Activated CD4-positive, alpha-beta memory T cell treated with anti-CD3 and anti-CD28 coated beads for 36 hours (primary cell): ENCODE measurements at regions of chr9 and their contacts with region 1.

Region 1: DNA sequence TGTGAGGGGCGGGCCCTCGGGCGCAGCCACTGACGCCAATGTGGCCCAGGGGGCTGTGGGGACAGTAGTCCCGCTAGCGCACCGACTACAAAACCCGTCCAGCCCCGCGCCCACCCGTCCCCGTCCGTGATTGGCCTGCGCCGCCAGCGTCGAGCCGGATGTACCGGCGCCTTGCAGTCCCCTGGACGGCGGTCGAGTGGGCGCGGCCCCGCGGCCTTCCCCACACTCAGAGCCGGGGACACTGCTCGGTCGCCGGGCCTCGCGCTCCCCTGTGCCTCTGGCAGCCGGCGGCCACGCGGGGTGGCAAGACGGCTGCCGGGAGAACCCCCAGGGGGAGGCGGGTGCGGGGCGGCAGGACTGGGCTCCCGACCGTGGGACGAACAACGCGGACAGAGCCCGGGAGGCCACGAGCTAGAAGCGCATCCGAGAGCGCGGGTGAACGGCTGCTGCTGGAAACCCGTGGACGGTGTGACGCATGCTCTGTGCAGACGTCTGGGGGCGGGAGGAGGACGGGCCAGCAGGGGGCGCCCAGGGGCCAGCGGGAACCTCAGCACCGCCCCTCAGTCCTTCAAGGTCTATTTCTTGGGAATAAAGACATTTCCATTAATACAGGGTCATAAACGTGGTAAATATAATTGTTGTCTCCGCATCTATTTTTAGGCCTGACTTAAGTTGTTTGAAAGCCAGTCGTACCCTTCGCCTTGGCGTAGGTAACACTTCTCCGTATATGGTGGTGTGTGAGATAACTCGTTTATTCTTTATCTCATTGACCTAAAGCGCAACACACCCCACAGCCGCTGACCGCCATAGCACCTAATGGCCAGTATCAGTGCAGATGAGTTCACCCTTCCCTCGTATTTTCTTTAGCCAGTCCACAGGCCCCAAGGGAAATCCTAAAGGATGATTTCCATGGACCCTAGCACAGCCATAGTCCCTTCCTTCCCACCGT is 629 bp upstream of the BICD2 start:
- DNase-seq: peak; percentile 99
- H3K4me3 Mint-ChIP-seq: peak overlapping the region; percentile 82
- H3K27ac Mint-ChIP-seq: peak overlapping the region; percentile 79
- H3K4me1 Mint-ChIP-seq: peaks cover 48% of the 10 kb centered on the region
- H3K27me3 Mint-ChIP-seq: no peaks in the 10 kb centered on the region

Region 2: DNA sequence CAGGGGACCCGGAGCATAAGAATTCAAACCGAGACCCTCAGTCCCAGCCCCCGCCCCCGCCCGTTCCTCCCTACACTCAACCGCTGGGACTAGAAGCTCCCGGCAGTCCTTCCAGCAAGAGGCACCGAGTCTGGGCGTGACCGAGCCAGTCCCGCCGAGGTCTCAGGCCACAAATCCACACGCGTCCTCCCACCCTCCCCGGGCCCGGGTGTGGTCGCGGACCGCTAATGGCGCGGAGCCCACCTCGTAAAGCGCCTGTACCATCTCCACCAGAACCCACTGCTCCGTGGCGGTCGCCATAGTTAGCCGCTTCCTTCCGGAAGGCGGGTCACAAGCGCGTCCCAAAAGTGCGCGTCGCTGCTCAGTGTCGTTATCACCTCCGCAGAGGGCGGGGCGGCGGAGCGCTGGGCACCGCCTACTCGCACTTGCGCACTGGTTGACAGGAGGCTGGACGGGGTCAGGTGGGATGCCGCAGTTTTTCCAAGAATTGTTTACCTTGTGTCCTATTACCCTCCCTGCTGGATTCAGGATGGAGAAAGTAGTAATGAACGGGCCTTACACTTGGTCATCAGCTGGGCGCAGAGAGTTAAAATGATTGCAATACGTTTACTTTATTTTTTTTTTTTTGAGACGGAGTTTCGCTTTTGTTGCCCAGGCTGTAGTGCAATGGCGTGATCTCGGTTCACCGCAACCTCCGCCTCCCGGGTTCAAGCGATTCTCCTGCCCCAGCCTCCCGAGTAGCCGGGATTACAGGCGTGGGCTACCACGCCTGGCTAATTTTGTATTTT is 650.0 kb before region 1 on chr9 and contains the start of gene SPTLC1:
- CTCF ChIA-PET with region 1: no interaction called
- POLR2A ChIA-PET with region 1: no interaction called
- intact Hi-C with region 1: loop called (anchors 2 kb)
- DNase-seq: peak; percentile 97
- H3K4me3 Mint-ChIP-seq: peak within 1 kb of the TSS; percentile 97
- H3K27ac Mint-ChIP-seq: peak within 1 kb of the TSS; percentile 94
- H3K4me1 Mint-ChIP-seq: peaks cover 22% of the 10 kb centered on the region
- H3K27me3 Mint-ChIP-seq: no peaks in the 10 kb centered on the region
- total RNA-seq, gene SPTLC1: 39.9 to 41.2 TPM

Region 3: GRCh38 chr9:92669890-92670708 is 95.2 kb before region 1 on chr9 and contains the start of gene IPPK:
- CTCF ChIA-PET with region 1: interaction called, 4 read pairs
- POLR2A ChIA-PET with region 1: interaction called, 15 read pairs
- intact Hi-C with region 1: loop called (anchors 1 kb)
- DNase-seq: peak; percentile 99
- H3K4me3 Mint-ChIP-seq: peak within 1 kb of the TSS; percentile 95
- H3K27ac Mint-ChIP-seq: peak within 1 kb of the TSS; percentile 85
- H3K4me1 Mint-ChIP-seq: peaks cover 35% of the 10 kb centered on the region
- H3K27me3 Mint-ChIP-seq: no peaks in the 10 kb centered on the region
- total RNA-seq, gene IPPK: 10.8 to 11.0 TPM

Region 4: GRCh38 chr9:92738661-92739081 is 26.6 kb before region 1 on chr9:
- CTCF ChIA-PET with region 1: no interaction called
- POLR2A ChIA-PET with region 1: no interaction called
- intact Hi-C with region 1: no loop called
- DNase-seq: no peak
- H3K4me3 Mint-ChIP-seq: no peak overlapping the region
- H3K27ac Mint-ChIP-seq: no peak overlapping the region
- H3K4me1 Mint-ChIP-seq: peaks cover 62% of the 10 kb centered on the region
- H3K27me3 Mint-ChIP-seq: no peaks in the 10 kb centered on the region

Region 5: DNA sequence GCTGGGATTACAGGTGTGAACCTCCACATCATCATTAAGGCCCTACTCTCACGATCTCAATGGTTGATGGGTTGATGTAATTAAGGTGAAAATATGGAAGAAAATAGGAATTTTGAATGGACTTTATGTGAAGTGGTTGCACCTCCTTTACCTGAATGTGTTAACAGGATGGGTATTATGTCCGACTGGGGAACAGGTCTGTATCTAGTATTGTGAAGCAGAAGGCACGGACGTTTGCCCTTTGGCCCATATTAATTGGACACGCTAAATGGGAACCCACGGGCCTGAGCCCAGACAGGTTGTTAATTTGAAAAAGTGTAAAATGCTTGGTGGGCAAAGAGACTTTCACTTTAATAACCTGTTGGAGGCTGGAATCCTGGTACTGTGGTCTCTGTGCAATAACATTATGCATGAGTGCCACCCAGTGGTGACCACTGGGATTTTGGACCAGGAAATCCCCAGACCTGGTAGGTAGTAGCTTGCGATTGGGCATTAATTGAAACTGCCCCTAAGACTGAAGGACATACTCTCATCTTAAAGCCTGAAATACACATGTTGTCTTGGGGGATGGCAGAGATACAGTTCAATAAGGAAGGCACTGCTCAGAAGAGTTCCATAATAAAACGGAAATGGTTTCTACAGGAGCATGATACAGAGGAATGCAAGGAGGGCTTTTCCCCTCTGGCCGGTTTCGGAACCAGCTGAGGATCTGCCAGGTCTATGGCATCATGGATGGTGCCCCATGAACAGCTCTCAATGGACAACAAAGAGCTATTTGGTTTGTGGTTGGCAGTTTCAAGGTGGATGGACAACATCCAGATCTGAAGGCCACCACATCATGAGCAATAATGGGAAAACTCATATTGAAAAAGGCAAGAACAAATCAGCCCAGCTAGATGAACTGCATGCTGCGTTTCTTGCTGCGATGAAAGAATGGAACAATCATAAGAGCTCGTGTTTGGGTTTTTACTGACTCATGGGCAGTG is 25.6 kb after region 1 on chr9:
- CTCF ChIA-PET with region 1: interaction called, 11 read pairs
- POLR2A ChIA-PET with region 1: interaction called, 4 read pairs
- intact Hi-C with region 1: loop called (anchors 1 kb)
- DNase-seq: peak; percentile 78
- H3K4me3 Mint-ChIP-seq: peak overlapping the region; percentile 6
- H3K27ac Mint-ChIP-seq: peak overlapping the region; percentile 39
- H3K4me1 Mint-ChIP-seq: peaks cover 12% of the 10 kb centered on the region
- H3K27me3 Mint-ChIP-seq: no peaks in the 10 kb centered on the region

Region 6: GRCh38 chr9:92877531-92878430 is 112.5 kb after region 1 on chr9 and contains the start of gene ZNF484:
- CTCF ChIA-PET with region 1: no interaction called
- POLR2A ChIA-PET with region 1: no interaction called
- intact Hi-C with region 1: loop called (anchors 1 kb)
- DNase-seq: peak; percentile 98
- H3K4me3 Mint-ChIP-seq: peak within 1 kb of the TSS; percentile 97
- H3K27ac Mint-ChIP-seq: peak within 1 kb of the TSS; percentile 97
- H3K4me1 Mint-ChIP-seq: peaks cover 41% of the 10 kb centered on the region
- H3K27me3 Mint-ChIP-seq: no peaks in the 10 kb centered on the region
- total RNA-seq, gene ZNF484: 7.4 to 7.5 TPM

Region 7: DNA sequence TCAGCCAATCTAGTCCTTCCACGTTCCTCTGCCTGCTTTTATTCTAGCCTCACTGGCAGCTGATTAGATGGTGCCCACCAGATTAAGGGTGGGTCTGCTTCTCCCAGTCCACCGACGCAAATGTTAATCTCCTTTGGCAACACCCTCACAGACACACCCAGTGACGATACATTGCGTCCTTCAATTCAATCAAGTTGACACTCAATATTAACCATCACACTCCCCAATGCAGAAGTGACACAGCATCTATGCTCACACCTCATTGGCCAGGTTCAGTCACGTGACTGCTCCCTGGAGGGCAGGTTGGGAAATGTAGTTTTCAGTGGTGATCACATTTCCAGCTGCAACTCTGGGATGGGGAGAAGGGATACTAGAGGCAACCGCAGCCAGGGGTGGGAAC is 306.2 kb after region 1 on chr9:
- CTCF ChIA-PET with region 1: no interaction called
- POLR2A ChIA-PET with region 1: no interaction called
- intact Hi-C with region 1: no loop called
- DNase-seq: peak; percentile 48
- H3K4me3 Mint-ChIP-seq: no peak overlapping the region
- H3K27ac Mint-ChIP-seq: no peak overlapping the region
- H3K4me1 Mint-ChIP-seq: peaks cover 69% of the 10 kb centered on the region
- H3K27me3 Mint-ChIP-seq: no peaks in the 10 kb centered on the region